ENCODE measurements at regions of chr2 and their contacts with region 1.

Region 1: GRCh38 chr2:229431327-229431954 is 160.4 kb upstream of the PID1 start:
- DNase-seq: no peak
- ATAC-seq: no peak
- H3K4me3 Mint-ChIP-seq: no peak overlapping the region
- H3K27ac Mint-ChIP-seq: no peak overlapping the region
- H3K4me1 Mint-ChIP-seq: no peaks in the 10 kb centered on the region
- H3K27me3 Mint-ChIP-seq: no peaks in the 10 kb centered on the region
- CTCF ChIP-seq: no peak

Region 2: GRCh38 chr2:229586746-229587705 is 155.6 kb after region 1 on chr2:
- CTCF ChIA-PET with region 1: no interaction called
- POLR2A ChIA-PET with region 1: no interaction called
- intact Hi-C with region 1: loop called (anchors 10 kb)
- DNase-seq: no peak
- ATAC-seq: no peak
- H3K4me3 Mint-ChIP-seq: no peak overlapping the region
- H3K27ac Mint-ChIP-seq: no peak overlapping the region
- H3K4me1 Mint-ChIP-seq: no peaks in the 10 kb centered on the region
- H3K27me3 Mint-ChIP-seq: peaks cover 22% of the 10 kb centered on the region
- CTCF ChIP-seq: no peak

Region 3: GRCh38 chr2:229714736-229715541 is 283.5 kb after region 1 on chr2:
- CTCF ChIA-PET with region 1: no interaction called
- POLR2A ChIA-PET with region 1: no interaction called
- intact Hi-C with region 1: loop called (anchors 5 kb)
- DNase-seq: peak; percentile 17
- ATAC-seq: peak; percentile 32
- H3K4me3 Mint-ChIP-seq: peak overlapping the region; percentile 44
- H3K27ac Mint-ChIP-seq: no peak overlapping the region
- H3K4me1 Mint-ChIP-seq: peaks cover 18% of the 10 kb centered on the region
- H3K27me3 Mint-ChIP-seq: peaks cover 60% of the 10 kb centered on the region
- CTCF ChIP-seq: no peak

Measured in activated B cell treated with CpG ODN at 0.5 μM for 24 hours (primary cell).